ENCODE measurements at regions of chr12 and their contacts with region 1.

Region 1: GRCh38 chr12:2076196-2076570 is 23.4 kb downstream of the CACNA1C start:
- DNase-seq: no peak

Region 2: GRCh38 chr12:2113119-2113912 is 37.1 kb after region 1 on chr12:
- intact Hi-C with region 1: loop called (anchors 5 kb)
- DNase-seq: no peak

Region 3: DNA sequence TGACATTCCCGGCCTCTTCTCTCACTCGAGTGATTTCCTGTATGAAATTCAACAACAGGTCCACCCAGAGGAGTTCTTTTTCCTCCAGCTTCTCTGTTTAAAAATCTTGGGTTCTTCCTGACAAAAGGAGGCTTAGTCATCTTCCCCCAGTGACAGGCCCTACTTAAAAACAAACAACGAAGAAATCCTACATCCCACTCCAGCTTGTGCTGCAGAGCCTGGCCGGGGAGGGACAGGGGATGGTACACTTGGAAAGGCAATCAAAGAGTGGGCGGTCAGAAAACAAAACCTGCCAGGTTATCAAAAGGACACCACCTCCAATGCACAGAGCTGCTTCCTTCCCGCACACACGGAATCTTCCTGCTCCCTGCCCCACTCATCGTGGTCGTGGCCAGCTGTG is 77.9 kb after region 1 on chr12:
- intact Hi-C with region 1: loop called (anchors 5 kb)
- DNase-seq: no peak

Measured in cardiac septum (tissue), 1 donor.